Posterior vena cava (tissue), 2 donors: ENCODE measurements at regions of chr6 and their contacts with region 1.

Region 1: DNA sequence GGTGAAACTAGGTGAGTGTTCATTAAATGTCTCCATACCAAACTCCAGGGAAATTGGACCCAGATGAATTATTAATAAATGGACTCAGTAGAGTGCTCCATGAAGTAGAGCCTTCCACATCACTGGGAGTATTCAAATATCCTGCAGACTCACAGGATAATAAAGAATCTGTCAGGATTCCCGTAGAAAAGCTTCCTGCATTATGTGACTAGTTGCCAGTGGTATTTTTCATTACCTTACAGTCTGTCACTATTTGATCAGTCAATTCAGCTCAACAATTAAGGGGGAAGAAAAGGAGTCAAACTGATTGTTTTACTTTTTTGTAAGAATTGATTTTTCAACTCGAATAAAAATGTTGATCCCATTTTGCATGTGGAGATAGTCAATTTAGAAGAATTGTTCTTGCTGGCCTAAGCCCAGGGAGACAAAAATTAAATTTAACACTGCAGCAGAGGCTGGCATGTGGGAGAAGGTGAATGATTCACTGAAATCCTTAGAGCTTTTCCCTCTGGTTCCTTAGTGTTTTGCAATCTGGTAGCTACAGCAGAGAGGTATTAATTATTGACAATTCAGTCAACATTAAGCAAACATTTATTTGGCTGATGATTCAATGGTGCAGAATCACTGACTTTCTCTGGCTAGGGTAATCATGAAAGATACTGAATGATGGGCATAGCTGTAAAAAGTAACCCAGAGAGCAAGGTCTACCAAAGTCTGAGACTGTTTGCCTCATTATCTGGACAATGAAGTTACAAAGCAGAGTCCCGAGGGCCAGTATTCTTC is 442.4 kb downstream of the CD83 start:
- DNase-seq: no peak

Region 2: GRCh38 chr6:14590586-14590985 is 30.6 kb after region 1 on chr6:
- intact Hi-C with region 1: loop called in 1 of 2 experiments (anchors 1 kb)
- DNase-seq: no peak